H1 (cell line): ENCODE measurements at regions of chr7 and their contacts with region 1.

Region 1: GRCh38 chr7:20141666-20142065 is 75.5 kb downstream of the MACC1 start:
- DNase-seq: no peak
- H3K4me3 ChIP-seq: no peak overlapping the region
- H3K27ac ChIP-seq: no peak overlapping the region
- H3K4me1 ChIP-seq: peaks cover 0 to 3% (median 0%) of the 10 kb centered on the region in 4 experiments; a peak in 1 of 7 replicates
- H3K27me3 ChIP-seq: no peaks in the 10 kb centered on the region
- CTCF ChIP-seq: no peak
- EP300 ChIP-seq: no peak
- POLR2A ChIP-seq: no peak
- RAD21 ChIP-seq: no peak

Region 2: DNA sequence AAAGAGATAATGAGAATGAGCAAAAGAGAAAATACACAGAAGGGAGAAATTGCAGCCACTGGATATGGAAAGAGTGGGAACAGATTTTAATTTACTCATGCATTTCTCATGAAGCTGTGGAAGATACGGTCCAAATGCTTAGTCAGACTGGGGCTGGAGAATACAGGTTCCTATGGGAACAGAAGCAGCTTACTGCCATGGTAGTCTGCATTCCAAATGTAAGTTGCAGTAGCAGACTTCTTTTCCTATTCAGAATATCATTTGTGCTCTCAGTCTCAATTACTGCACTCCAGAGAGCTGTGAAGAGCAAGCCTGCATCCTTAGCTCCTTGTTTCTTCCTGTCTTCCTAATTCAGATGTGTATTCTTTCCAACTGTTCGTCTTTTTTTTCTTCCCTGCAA is 177.4 kb before region 1 on chr7:
- CTCF ChIA-PET with region 1: no interaction called
- POLR2A ChIA-PET with region 1: no interaction called
- DNase-seq: no peak
- H3K4me3 ChIP-seq: no peak overlapping the region
- H3K27ac ChIP-seq: no peak overlapping the region; the same call in 1 of the 2 replicates
- H3K4me1 ChIP-seq: no peaks in the 10 kb centered on the region
- H3K27me3 ChIP-seq: no peaks in the 10 kb centered on the region
- CTCF ChIP-seq: no peak
- EP300 ChIP-seq: no peak
- POLR2A ChIP-seq: no peak
- RAD21 ChIP-seq: no peak

Region 3: GRCh38 chr7:20113427-20114027 is 28.1 kb before region 1 on chr7:
- CTCF ChIA-PET with region 1: no interaction called
- POLR2A ChIA-PET with region 1: no interaction called
- DNase-seq: no peak
- H3K4me3 ChIP-seq: no peak overlapping the region
- H3K27ac ChIP-seq: no peak overlapping the region
- H3K4me1 ChIP-seq: peaks cover 2 to 37% (median 11%) of the 10 kb centered on the region in 4 experiments; a peak in 6 of 7 replicates
- H3K27me3 ChIP-seq: no peaks in the 10 kb centered on the region
- CTCF ChIP-seq: no peak
- EP300 ChIP-seq: no peak
- POLR2A ChIP-seq: no peak
- RAD21 ChIP-seq: no peak

Region 4: DNA sequence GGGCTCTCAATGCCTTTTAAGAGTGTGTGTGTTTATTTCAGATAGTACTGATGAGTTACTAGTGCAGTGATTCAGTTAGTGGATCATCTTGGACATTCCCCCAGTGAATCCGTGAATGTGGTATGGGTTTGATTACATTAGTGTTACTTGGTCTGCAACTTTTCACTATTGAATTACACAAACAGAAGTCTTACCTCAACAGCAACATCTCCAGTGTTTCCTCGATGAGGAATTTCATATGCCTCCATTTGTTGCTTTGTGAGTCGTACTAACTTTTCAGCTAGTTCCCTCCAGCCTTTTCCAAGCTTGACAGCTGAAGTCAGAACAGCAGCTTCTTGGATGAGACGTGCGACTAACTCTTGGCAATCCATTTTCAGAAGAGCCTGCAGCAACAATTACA is 12.3 kb after region 1 on chr7:
- CTCF ChIA-PET with region 1: interaction called, 16 read pairs
- POLR2A ChIA-PET with region 1: interaction called, 5 read pairs
- DNase-seq: no peak
- H3K4me3 ChIP-seq: no peak overlapping the region
- H3K27ac ChIP-seq: no peak overlapping the region
- H3K4me1 ChIP-seq: no peaks in the 10 kb centered on the region
- H3K27me3 ChIP-seq: no peaks in the 10 kb centered on the region
- CTCF ChIP-seq: no peak
- EP300 ChIP-seq: no peak
- POLR2A ChIP-seq: no peak
- RAD21 ChIP-seq: no peak

Region 5: GRCh38 chr7:20219446-20220292 is 78.0 kb after region 1 on chr7:
- CTCF ChIA-PET with region 1: no interaction called
- POLR2A ChIA-PET with region 1: no interaction called
- DNase-seq: no peak
- H3K4me3 ChIP-seq: no peak overlapping the region
- H3K27ac ChIP-seq: no peak overlapping the region; the same call in 1 of the 2 replicates
- H3K4me1 ChIP-seq: peaks cover 0 to 8% (median 7%) of the 10 kb centered on the region in 4 experiments; a peak in 4 of 7 replicates
- H3K27me3 ChIP-seq: no peaks in the 10 kb centered on the region
- CTCF ChIP-seq: no peak
- EP300 ChIP-seq: no peak
- POLR2A ChIP-seq: no peak
- RAD21 ChIP-seq: no peak